ENCODE measurements at regions of chr7 and their contacts with region 1.

Region 1: DNA sequence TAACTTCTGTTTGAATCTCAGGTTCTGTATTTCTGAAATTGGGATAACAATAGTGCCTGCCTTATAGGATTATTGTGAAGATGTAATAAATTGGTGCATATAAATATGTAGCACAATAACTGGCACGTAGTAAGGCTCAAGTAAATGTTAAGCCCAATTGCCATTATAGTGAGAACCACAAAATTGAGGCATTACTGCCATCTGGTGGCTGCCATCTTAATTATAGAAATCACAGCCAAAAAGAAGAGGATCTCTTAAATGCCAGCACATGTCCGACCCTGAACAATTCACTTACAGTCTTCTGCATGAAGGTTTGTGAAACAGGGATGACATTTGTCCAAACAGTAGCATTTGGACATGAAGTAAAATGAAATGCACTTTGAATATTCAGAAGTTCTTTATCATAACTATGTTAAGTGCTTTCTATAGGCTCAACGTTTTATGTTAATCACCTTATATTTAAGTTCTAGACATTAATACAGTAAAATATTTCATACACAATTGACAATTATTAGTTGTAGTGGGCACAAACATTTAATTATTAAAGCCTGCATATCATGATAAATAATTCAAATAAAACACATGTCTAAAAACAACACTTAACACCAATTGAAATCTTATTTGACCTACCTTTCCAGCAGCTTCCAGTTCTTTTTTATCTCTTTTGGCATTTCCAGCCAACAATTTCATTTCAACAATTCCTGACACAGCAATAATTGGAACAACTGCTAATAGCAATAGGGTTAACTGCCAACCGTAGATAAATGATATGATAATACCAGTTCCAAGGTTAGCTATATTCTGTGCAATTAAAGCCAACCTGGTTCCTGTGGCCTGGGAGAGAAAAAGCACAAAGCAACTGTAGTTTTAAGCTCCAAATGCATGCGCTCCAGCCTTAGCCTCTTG is 58.5 kb downstream of the ABCB4 start:
- DNase-seq: peak; percentile 85
- H3K4me3 Mint-ChIP-seq: no peak overlapping the region
- H3K27ac Mint-ChIP-seq: no peak overlapping the region
- H3K4me1 Mint-ChIP-seq: no peaks in the 10 kb centered on the region
- H3K27me3 Mint-ChIP-seq: no peaks in the 10 kb centered on the region

Region 2: GRCh38 chr7:85890244-85890811 is 1526.6 kb before region 1 on chr7:
- CTCF ChIA-PET with region 1: no interaction called
- intact Hi-C with region 1: loop called (anchors 10 kb)
- DNase-seq: no peak
- H3K4me3 Mint-ChIP-seq: no peak overlapping the region
- H3K27ac Mint-ChIP-seq: no peak overlapping the region
- H3K4me1 Mint-ChIP-seq: no peaks in the 10 kb centered on the region
- H3K27me3 Mint-ChIP-seq: no peaks in the 10 kb centered on the region

Region 3: GRCh38 chr7:86926732-86927131 is 490.2 kb before region 1 on chr7:
- CTCF ChIA-PET with region 1: interaction called, 26 read pairs
- intact Hi-C with region 1: loop called (anchors 1 kb)
- DNase-seq: peak; percentile 43
- H3K4me3 Mint-ChIP-seq: no peak overlapping the region
- H3K27ac Mint-ChIP-seq: no peak overlapping the region
- H3K4me1 Mint-ChIP-seq: peaks cover 16% of the 10 kb centered on the region
- H3K27me3 Mint-ChIP-seq: peaks cover 2% of the 10 kb centered on the region

Region 4: GRCh38 chr7:87059525-87060287 is 357.2 kb before region 1 on chr7 and contains the start of gene ELAPOR2:
- CTCF ChIA-PET with region 1: no interaction called
- intact Hi-C with region 1: loop called (anchors 5 kb)
- DNase-seq: peak; percentile 79
- H3K4me3 Mint-ChIP-seq: peak within 1 kb of the TSS; percentile 71
- H3K27ac Mint-ChIP-seq: no peak within 1 kb of the TSS
- H3K4me1 Mint-ChIP-seq: peaks cover 12% of the 10 kb centered on the region
- H3K27me3 Mint-ChIP-seq: peaks cover 5% of the 10 kb centered on the region
- total RNA-seq, gene ELAPOR2: 3.2 to 3.9 TPM

Region 5: DNA sequence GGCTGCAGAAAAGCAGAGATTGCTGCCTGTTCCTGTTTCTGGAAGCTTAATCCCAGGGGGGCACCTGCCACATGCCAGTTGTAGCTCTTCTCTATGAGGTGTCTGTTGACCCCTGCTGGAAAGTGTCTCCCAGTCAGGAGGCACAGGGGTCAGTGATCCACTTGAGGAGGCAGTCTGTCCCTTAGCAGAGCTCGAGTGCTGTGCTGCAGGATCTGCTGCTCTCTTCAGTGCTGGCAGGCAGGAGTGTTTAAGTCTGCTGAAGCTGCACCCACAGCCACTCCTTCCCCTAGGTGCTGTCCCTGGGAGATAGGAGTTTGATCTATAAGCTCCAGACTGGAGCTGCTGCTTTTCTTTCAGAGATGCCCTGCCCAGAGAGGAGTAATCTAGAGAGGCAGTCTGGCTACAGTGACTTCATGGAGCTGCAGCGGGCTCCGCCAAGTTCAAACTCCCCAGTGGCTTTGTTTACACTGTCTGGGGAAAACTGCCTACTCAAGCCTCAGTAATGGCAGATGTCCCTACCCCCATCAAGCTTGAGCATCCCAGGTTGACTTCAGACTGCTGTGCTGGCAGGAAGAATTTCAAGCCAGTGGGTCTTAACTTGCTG is 129.1 kb before region 1 on chr7:
- CTCF ChIA-PET with region 1: no interaction called
- intact Hi-C with region 1: no loop called
- DNase-seq: no peak
- H3K4me3 Mint-ChIP-seq: no peak overlapping the region
- H3K27ac Mint-ChIP-seq: no peak overlapping the region
- H3K4me1 Mint-ChIP-seq: no peaks in the 10 kb centered on the region
- H3K27me3 Mint-ChIP-seq: peaks cover 8% of the 10 kb centered on the region

Region 6: DNA sequence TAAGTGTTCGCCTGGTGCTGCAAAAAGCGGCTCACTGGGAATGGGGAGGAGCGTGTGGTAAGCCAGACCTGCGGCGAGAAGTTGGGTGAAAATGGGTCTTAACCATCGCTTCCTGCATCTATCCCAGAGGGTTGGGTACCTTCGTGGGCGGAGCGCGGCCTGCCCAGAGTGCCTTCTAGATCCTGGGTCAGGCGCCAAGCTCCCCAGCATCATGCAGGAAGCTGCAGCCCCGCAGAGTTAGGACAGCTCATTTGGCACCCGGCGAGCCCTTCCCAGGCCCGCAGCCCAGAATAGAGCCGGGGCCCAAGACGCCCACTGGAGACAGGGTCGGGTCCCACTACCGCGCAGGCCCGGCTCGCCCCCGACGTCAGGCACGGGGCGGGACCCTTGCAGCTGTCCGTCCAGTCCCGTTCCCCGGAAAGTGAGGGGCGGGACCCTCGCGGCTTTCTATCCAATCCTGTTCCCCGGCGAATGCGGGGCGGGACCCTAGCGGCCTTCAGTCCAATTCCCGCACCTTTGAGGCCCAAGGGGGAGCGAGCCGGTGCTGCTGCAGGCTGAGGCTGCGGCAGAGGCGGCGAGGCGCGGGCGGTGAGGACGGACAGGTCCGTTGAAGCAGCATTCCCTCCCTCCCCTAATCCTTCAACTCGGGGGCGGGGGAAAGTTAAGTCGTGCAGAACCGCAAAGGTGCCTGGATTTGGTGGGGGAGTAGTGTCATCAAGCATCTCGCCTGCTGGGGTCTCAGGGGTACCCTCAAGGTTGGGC is 71.6 kb before region 1 on chr7 and contains the start of gene CROT:
- CTCF ChIA-PET with region 1: no interaction called
- intact Hi-C with region 1: loop called (anchors 1 kb)
- DNase-seq: peak; percentile 97
- H3K4me3 Mint-ChIP-seq: peak within 1 kb of the TSS; percentile 89
- H3K27ac Mint-ChIP-seq: peak within 1 kb of the TSS; percentile 86
- H3K4me1 Mint-ChIP-seq: peaks cover 32% of the 10 kb centered on the region
- H3K27me3 Mint-ChIP-seq: no peaks in the 10 kb centered on the region
- total RNA-seq, gene CROT: 6.0 to 6.1 TPM

Region 7: GRCh38 chr7:87473986-87474385 is 57.1 kb after region 1 on chr7:
- CTCF ChIA-PET with region 1: no interaction called
- intact Hi-C with region 1: no loop called
- DNase-seq: no peak
- H3K4me3 Mint-ChIP-seq: no peak overlapping the region
- H3K27ac Mint-ChIP-seq: no peak overlapping the region
- H3K4me1 Mint-ChIP-seq: peaks cover 7% of the 10 kb centered on the region
- H3K27me3 Mint-ChIP-seq: peaks cover 45% of the 10 kb centered on the region

Region 8: GRCh38 chr7:88111136-88111743 is 694.3 kb after region 1 on chr7:
- CTCF ChIA-PET with region 1: no interaction called
- intact Hi-C with region 1: loop called (anchors 5 kb)
- DNase-seq: no peak
- H3K4me3 Mint-ChIP-seq: no peak overlapping the region
- H3K27ac Mint-ChIP-seq: no peak overlapping the region
- H3K4me1 Mint-ChIP-seq: peaks cover 4% of the 10 kb centered on the region
- H3K27me3 Mint-ChIP-seq: no peaks in the 10 kb centered on the region